Uterus (tissue), 4 donors: ENCODE measurements at regions of chr1 and their contacts with region 1.

Region 1: GRCh38 chr1:94854458-94855306 is 34.5 kb downstream of the SLC44A3 start:
- DNase-seq: peak; percentile 88 to 92
- H3K4me3 ChIP-seq: peak overlapping the region; percentile 38 to 40
- H3K27ac ChIP-seq: peak overlapping the region; percentile 88 to 89
- H3K4me1 ChIP-seq: peaks cover 0 to under 1% of the 10 kb centered on the region in 2 donors
- H3K27me3 ChIP-seq: no peaks in the 10 kb centered on the region
- CTCF ChIP-seq: peak; percentile 88 to 99 (median 98)
- POLR2A ChIP-seq: no peak

Region 2: DNA sequence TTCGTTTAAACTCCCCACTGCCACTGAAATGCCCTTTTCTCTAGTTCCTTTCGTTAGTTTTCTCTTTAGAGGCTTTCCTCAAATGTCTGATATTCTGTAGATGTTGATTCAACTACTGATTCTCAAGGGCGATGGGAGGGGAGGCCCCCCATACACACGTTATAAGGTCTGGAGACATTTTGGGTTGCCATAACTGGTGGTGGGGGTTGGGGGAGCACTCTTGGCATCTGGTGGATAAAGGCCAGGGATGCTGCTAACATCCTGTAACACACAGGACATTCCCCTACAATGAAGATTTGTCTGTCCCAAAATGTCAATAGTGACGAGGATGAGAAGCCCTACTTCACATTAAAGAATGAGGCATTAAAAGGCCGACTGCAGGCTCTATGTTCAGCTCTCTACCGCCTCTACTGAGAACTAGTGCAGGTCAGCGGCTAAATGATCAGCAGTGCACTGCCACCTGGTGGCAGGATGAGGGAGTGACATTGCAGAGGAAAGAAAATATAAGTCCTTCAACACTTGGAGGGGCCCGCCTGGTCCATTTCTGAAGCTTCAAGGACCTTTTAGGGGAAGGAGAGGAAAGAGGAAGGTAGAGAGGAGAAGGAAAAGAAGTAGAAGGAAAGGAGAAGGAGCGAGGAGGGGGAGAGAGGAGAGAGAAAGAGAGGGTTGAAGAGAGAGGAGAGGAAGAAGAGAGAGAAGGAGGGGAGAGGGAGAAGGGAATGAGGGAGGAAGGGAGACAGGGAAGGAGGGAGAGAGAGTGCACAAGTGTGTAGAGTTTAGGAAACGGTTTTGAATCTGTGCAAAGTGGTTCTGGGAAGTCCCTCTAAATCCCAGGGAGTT is 188.7 kb after region 1 on chr1:
- intact Hi-C with region 1: loop called (anchors 2 kb)
- DNase-seq: peak; percentile 84 to 92
- H3K4me3 ChIP-seq: no peak overlapping the region
- H3K27ac ChIP-seq: peak overlapping the region; percentile 78 to 85
- H3K4me1 ChIP-seq: peaks cover 0 to 13% of the 10 kb centered on the region in 2 donors
- H3K27me3 ChIP-seq: no peaks in the 10 kb centered on the region
- CTCF ChIP-seq: peak; percentile 97 to 99 (median 98)
- POLR2A ChIP-seq: no peak